Activated CD4-positive, alpha-beta T cell treated with anti-CD3 and anti-CD28 coated beads, Interleukin-2, amount 10 ng/mL, durations not matched to agents 24 days and 14 days (primary cell): ENCODE measurements at regions of chr1 and their contacts with region 1.

Region 1: DNA sequence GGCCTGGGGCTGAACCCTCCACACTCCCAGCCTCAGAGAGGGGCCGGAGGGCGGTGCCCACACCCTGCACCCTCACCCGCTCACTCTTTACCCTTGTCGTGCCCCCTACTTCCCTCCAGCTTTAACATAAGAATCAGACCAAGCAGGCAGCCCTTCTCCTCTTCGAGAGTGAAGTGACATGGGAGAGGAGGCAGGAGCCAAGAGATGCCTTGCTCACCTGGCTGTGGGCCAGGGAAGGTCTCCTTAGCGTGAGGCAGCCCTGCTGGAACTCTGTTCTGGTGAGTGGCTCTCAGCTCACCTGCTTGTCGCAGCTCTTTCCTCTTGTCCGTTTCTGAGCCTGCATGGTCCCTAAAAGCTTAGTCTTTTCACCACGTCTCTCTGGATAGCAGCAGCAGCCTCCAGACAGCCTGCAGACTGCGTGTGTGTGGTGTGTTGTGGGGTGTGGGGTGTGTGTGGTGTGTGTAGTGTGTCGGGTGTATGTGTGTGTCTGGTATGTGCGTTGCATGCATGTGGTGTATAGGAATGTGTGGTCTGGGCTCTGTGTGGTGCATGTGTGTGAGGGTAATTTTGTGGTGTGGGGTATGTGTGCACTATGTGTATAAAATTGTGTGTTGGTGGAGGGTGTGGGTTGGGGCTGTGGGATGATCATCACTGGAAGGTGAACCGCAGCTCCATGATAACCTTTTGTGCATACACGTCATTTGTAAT is 86.7 kb downstream of the CCDC185 start:
- DNase-seq: no peak
- H3K4me3 Mint-ChIP-seq: no peak overlapping the region
- H3K27ac Mint-ChIP-seq: no peak overlapping the region
- H3K4me1 Mint-ChIP-seq: no peaks in the 10 kb centered on the region
- H3K27me3 Mint-ChIP-seq: peaks cover 16% of the 10 kb centered on the region

Region 2: GRCh38 chr1:222521299-222522104 is 958.4 kb before region 1 on chr1:
- intact Hi-C with region 1: loop called (anchors 5 kb)
- DNase-seq: no peak
- H3K4me3 Mint-ChIP-seq: no peak overlapping the region
- H3K27ac Mint-ChIP-seq: no peak overlapping the region
- H3K4me1 Mint-ChIP-seq: no peaks in the 10 kb centered on the region
- H3K27me3 Mint-ChIP-seq: peaks cover 5% of the 10 kb centered on the region